ENCODE measurements at regions of chr7 and their contacts with region 1.

Region 1: DNA sequence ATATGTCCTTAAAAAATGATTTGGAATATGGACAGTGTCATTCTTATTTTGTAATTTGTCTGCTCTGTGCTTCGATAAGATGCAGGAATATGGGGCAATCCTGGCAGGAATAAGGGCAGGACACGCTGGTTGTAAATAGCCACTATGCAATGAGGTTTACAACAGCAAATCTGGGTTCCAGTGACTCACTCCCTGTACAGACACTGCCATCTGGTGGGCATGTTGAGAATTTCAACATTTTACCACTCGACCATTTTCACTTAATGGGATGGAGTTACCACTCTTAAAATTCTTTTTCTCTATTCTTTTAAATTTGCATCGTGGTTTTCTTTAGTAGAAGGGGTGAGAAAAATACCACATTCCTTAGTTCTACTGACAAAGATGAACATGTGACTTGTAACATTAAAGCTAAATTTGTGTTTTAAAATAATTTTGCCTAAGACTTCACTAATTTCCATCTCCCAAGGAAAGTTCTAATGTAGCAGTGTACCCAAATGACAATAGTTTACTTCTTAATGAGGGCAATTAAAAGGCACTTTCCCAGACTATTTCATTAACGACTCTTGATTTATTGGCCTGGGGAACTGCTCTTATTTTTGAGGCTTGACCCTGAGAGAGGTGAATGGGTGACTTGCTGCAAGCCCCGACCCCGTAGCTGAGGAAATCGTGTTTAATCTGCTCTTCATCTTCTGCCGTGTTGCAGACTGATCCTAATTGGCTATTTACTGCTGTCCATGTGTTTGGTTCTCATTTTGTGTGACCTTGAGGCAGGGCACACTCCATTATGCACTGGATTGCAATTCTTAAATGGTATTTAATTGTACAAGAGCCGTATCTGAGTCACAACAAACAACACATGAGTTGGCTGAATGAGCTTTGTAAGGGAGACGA is 173.6 kb upstream of the IMMP2L start:
- DNase-seq: peak; percentile 87 to 92 (median 88)
- ATAC-seq: peak; percentile 81
- H3K4me3 ChIP-seq: no peak overlapping the region
- H3K27ac ChIP-seq: no peak overlapping the region
- H3K4me1 ChIP-seq: no peaks in the 10 kb centered on the region
- H3K27me3 ChIP-seq: peaks cover 5 to 9% of the 10 kb centered on the region in 2 experiments; a peak in 3 of 5 replicates
- CTCF ChIP-seq: peak; percentile 89 to 98 (median 94)
- EP300 ChIP-seq: no peak
- POLR2A ChIP-seq: no peak
- RAD21 ChIP-seq: peak; percentile 98 to 99

Region 2: GRCh38 chr7:111089822-111090426 is 646.0 kb before region 1 on chr7:
- CTCF ChIA-PET with region 1: interaction called, 4 read pairs
- POLR2A ChIA-PET with region 1: no interaction called
- in situ Hi-C with region 1: loop called (anchors 10 kb)
- intact Hi-C with region 1: loop called (anchors 2 kb)
- DNase-seq: peak; percentile 66 to 72 (median 69)
- ATAC-seq: peak; percentile 83
- H3K4me3 ChIP-seq: no peak overlapping the region
- H3K27ac ChIP-seq: no peak overlapping the region
- H3K4me1 ChIP-seq: no peaks in the 10 kb centered on the region; a peak in 1 of 5 replicates
- H3K27me3 ChIP-seq: no peaks in the 10 kb centered on the region
- CTCF ChIP-seq: peak; percentile 54 to 80 (median 62)
- EP300 ChIP-seq: no peak
- POLR2A ChIP-seq: no peak
- RAD21 ChIP-seq: peak; percentile 67 to 77

Region 3: DNA sequence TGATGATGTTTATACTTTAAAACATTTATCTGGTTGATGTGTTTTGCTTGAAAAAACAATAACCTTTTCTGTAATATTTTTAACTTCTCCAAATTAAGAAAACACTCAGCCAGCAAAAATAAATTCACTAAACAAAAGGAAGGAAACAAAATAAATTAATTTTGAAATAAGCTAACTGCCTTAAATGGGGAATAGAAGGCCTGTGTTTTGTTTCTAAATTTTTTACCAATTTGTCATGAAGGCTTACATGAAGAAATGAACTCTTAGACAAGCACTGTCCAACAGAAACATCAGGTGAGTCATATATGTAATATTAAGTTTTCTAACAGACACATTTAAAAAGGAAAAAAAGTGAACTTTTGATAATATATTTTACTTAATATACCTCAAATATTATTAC is 576.5 kb before region 1 on chr7:
- CTCF ChIA-PET with region 1: no interaction called
- POLR2A ChIA-PET with region 1: no interaction called
- in situ Hi-C with region 1: no loop called
- intact Hi-C with region 1: loop called (anchors 10 kb)
- DNase-seq: no peak
- ATAC-seq: no peak
- H3K4me3 ChIP-seq: no peak overlapping the region
- H3K27ac ChIP-seq: no peak overlapping the region
- H3K4me1 ChIP-seq: no peaks in the 10 kb centered on the region
- H3K27me3 ChIP-seq: no peaks in the 10 kb centered on the region
- CTCF ChIP-seq: no peak
- EP300 ChIP-seq: no peak
- POLR2A ChIP-seq: no peak
- RAD21 ChIP-seq: no peak

Region 4: GRCh38 chr7:111486472-111487142 is 249.3 kb before region 1 on chr7:
- CTCF ChIA-PET with region 1: interaction called, 4 read pairs
- POLR2A ChIA-PET with region 1: no interaction called
- in situ Hi-C with region 1: loop called (anchors 5 kb)
- intact Hi-C with region 1: loop called (anchors 2 kb)
- DNase-seq: peak; percentile 40 to 87 (median 60)
- ATAC-seq: peak; percentile 90
- H3K4me3 ChIP-seq: no peak overlapping the region
- H3K27ac ChIP-seq: no peak overlapping the region; the same call in 2 of the 3 replicates
- H3K4me1 ChIP-seq: no peaks in the 10 kb centered on the region
- H3K27me3 ChIP-seq: no peaks in the 10 kb centered on the region
- CTCF ChIP-seq: peak; percentile 73 to 96 (median 81)
- EP300 ChIP-seq: peak; percentile 44; the same call in 1 of the 2 replicates
- POLR2A ChIP-seq: no peak
- RAD21 ChIP-seq: peak; percentile 97 to 98

Region 5: GRCh38 chr7:111639934-111640333 is 96.0 kb before region 1 on chr7:
- CTCF ChIA-PET with region 1: interaction called, 4 read pairs
- POLR2A ChIA-PET with region 1: no interaction called
- in situ Hi-C with region 1: no loop called
- intact Hi-C with region 1: loop called (anchors 1 kb)
- DNase-seq: no peak
- ATAC-seq: no peak
- H3K4me3 ChIP-seq: no peak overlapping the region
- H3K27ac ChIP-seq: no peak overlapping the region
- H3K4me1 ChIP-seq: no peaks in the 10 kb centered on the region
- H3K27me3 ChIP-seq: no peaks in the 10 kb centered on the region
- CTCF ChIP-seq: no peak
- EP300 ChIP-seq: no peak
- POLR2A ChIP-seq: no peak
- RAD21 ChIP-seq: no peak

Region 6: GRCh38 chr7:111763221-111763801 is 27.4 kb after region 1 on chr7:
- CTCF ChIA-PET with region 1: interaction called, 12 read pairs
- POLR2A ChIA-PET with region 1: interaction called, 3 read pairs
- in situ Hi-C with region 1: no loop called
- intact Hi-C with region 1: no loop called
- DNase-seq: peak in 2 of 4 experiments; percentile 43 to 61
- ATAC-seq: peak; percentile 83
- H3K4me3 ChIP-seq: no peak overlapping the region
- H3K27ac ChIP-seq: no peak overlapping the region
- H3K4me1 ChIP-seq: no peaks in the 10 kb centered on the region
- H3K27me3 ChIP-seq: peaks cover 0 to 3% of the 10 kb centered on the region in 2 experiments; a peak in 1 of 5 replicates
- CTCF ChIP-seq: peak; percentile 51 to 81 (median 55); a peak in 5 of 6 replicates
- EP300 ChIP-seq: no peak
- POLR2A ChIP-seq: no peak
- RAD21 ChIP-seq: peak; percentile 82 to 88

Measured in K562 (cell line).